T-cell (primary cell): ENCODE measurements at regions of chr13 and their contacts with region 1.

Region 1: DNA sequence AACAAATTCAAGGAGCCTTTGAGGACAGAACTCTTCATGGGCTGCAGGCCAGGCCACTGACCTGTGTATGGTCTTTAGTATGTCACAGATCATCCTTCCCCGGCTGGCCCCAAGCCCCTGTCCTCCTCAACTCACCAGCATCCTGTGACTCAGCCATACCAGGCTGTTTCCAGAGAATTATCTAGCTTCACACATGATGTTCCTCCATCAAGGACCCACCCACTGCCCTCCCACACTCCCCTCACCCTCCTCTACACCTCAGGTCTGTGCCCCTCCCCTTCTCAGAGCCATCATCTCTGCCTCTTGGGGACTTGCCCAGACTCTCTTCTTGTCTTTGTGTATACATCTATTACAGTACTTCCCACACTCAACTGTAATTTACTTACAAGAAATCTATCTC is 14.7 kb downstream of the DCT start:
- DNase-seq: no peak
- ATAC-seq: no peak
- H3K4me3 ChIP-seq: no peak overlapping the region
- H3K4me3 Mint-ChIP-seq: no peak overlapping the region
- H3K27ac ChIP-seq: no peak overlapping the region
- H3K27ac Mint-ChIP-seq: no peak overlapping the region
- H3K4me1 ChIP-seq: no peaks in the 10 kb centered on the region
- H3K4me1 Mint-ChIP-seq: no peaks in the 10 kb centered on the region
- H3K27me3 ChIP-seq: peaks cover 0 to 5% of the 10 kb centered on the region in 2 experiments
- H3K27me3 Mint-ChIP-seq: peaks cover 0 to 7% of the 10 kb centered on the region in 2 donors

Region 2: DNA sequence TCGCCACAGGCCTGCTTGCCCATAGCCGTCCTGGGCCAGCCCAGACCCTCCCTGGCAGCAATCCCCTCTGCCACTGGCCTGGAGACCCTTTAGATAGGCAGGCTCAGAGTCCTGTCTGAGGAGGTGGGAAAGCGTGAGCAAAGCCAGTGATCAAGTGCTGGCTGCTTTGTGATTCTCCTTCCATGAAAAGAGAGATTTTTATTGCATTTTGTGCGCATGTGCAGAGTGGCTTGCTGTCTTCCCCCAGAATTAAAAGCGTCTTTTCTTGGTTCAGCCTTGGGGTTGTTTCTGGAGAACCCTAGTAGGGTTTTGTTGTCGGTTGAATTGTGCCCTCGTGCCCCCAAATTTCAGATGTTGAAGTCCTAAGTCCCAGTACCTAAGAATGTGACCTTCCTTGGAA is 59.6 kb after region 1 on chr13:
- CTCF ChIA-PET with region 1: no interaction called
- POLR2A ChIA-PET with region 1: no interaction called
- DNase-seq: no peak
- ATAC-seq: no peak
- H3K4me3 ChIP-seq: no peak overlapping the region
- H3K4me3 Mint-ChIP-seq: no peak overlapping the region
- H3K27ac ChIP-seq: no peak overlapping the region
- H3K27ac Mint-ChIP-seq: no peak overlapping the region
- H3K4me1 ChIP-seq: no peaks in the 10 kb centered on the region
- H3K4me1 Mint-ChIP-seq: peaks cover 0 to 5% (median 0%) of the 10 kb centered on the region in 3 donors
- H3K27me3 ChIP-seq: peaks cover 0 to 12% of the 10 kb centered on the region in 2 experiments
- H3K27me3 Mint-ChIP-seq: peaks cover 4 to 6% of the 10 kb centered on the region in 2 donors

Region 3: DNA sequence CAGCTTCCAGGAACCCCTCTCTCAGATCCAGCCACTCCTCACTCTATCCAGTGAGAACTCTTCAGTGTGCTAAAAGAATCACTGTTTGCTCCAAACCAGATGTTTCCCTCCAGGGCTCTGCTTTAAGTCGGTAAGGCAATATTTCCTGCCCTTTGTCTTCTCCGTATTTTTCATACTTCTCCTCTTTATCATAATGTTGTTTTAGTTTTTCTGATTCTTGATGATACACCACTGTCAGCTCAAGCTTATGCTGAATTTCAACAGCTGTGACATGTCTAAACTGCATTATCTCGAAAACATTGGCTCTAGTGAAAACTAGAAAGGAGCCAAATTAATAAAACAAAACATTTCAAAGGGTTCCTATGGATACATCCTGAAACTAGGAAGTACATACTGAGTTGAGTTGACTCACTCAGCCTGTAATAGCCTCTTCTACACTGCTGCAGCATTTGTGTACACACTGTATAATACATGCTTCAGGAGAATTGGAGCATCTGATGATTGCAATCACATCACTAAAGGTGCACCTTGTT is 176.7 kb after region 1 on chr13:
- CTCF ChIA-PET with region 1: interaction called in 1 of 2 experiments, 11 read pairs
- POLR2A ChIA-PET with region 1: no interaction called
- DNase-seq: no peak
- ATAC-seq: no peak
- H3K4me3 ChIP-seq: no peak overlapping the region
- H3K4me3 Mint-ChIP-seq: no peak overlapping the region
- H3K27ac ChIP-seq: no peak overlapping the region
- H3K27ac Mint-ChIP-seq: no peak overlapping the region
- H3K4me1 ChIP-seq: no peaks in the 10 kb centered on the region
- H3K4me1 Mint-ChIP-seq: no peaks in the 10 kb centered on the region
- H3K27me3 ChIP-seq: peaks cover 0 to 4% of the 10 kb centered on the region in 2 experiments
- H3K27me3 Mint-ChIP-seq: peaks cover 3% of the 10 kb centered on the region in 2 donors

Region 4: GRCh38 chr13:95536632-95537241 is 1072.0 kb after region 1 on chr13:
- CTCF ChIA-PET with region 1: no interaction called
- POLR2A ChIA-PET with region 1: interaction called in 1 of 2 experiments, 10 read pairs
- DNase-seq: peak in 1 of 35 experiments; percentile 16
- ATAC-seq: no peak
- H3K4me3 ChIP-seq: no peak overlapping the region
- H3K4me3 Mint-ChIP-seq: no peak overlapping the region
- H3K27ac ChIP-seq: no peak overlapping the region
- H3K27ac Mint-ChIP-seq: no peak overlapping the region
- H3K4me1 ChIP-seq: no peaks in the 10 kb centered on the region
- H3K4me1 Mint-ChIP-seq: no peaks in the 10 kb centered on the region
- H3K27me3 ChIP-seq: peaks cover 0 to 3% of the 10 kb centered on the region in 2 experiments
- H3K27me3 Mint-ChIP-seq: peaks cover 24 to 37% of the 10 kb centered on the region in 2 donors